ENCODE measurements at regions of chr14 and their contacts with region 1.

Region 1: DNA sequence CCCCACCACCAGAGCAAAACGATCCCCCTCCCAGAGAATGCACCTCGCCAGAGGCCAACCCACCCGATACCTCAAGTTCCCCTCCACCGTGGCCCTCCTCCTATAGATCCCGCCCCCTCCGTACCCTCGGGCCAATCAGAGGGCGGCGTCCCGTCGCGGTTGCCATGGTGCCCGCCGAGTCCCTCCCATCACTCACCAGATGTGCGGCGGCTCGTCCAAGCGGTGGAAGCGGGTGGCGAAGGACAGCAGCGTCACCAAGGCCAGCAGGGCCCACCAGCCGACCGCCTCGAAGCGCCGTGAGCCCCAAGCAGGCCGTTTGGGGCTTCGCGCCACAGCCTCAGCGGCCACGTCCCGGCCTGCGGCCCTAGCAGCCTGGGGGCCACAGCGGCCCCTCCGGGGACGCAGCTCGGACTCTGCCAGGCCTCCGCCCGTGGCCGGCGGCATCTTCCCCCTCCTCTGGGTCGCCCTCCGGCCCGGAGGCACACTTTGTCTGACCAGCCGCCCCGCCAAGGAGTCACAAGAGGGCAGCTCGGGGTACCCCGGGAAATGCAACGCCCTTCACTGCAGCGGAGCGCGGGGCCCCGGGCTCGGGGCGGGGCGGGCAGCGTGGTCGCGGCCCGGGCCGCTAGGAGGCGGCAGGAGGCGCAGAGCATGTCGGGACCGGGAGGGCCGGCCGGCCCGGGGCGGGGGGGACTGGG is at the start of gene POMT2:
- DNase-seq: peak; percentile 93
- ATAC-seq: peak; percentile 54
- H3K4me3 Mint-ChIP-seq: peak within 1 kb of the TSS; percentile 99
- H3K27ac Mint-ChIP-seq: peak within 1 kb of the TSS; percentile 100
- H3K4me1 Mint-ChIP-seq: peaks cover 19% of the 10 kb centered on the region
- H3K27me3 Mint-ChIP-seq: no peaks in the 10 kb centered on the region
- CTCF ChIP-seq: no peak
- total RNA-seq, gene POMT2: 28.7 and 30.8 TPM in 2 replicates

Region 2: DNA sequence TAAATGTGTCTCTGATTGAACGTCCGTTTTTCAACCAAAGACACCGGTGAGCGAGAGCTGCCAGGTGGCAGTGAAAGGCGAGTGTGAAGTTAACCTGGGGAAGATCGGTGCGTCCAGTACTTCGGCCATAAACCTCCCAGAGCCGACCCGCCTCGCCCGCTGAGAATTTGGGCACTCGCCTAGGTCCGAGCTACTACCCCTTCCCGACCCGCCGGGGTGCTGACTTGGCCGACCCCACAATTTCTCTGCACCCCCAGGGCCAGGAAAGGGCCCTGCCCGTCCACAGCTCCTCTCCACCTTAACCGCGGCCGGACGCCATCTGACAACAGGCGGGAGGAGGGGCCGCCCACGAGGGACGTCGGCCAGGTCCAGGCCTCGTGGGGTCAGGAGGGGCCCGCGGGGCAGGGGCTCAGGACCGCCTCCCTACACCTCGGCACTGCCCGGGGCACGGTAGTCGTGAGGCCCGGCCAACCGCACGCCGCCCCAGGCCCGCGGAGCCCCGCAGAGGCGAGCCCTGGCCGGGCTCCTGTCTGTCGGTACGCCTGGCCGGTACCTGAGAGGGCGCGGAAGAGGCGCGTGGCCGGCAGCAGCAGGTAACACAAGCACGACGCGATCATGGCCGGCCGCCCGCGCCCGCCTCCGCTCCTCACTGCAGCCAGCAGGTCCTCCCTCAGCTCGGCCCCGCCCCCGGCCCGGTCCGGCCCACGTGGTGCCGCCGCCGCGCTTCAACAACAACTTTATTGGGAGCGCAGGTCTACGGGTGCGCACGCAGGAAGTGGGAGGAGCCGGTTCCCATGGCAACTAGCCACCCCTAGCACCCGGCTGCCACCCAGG is 508.0 kb before region 1 on chr14 and contains the start of gene ANGEL1:
- CTCF ChIA-PET with region 1: no interaction called
- POLR2A ChIA-PET with region 1: interaction called, 3 read pairs
- intact Hi-C with region 1: loop called (anchors 1 kb)
- DNase-seq: peak; percentile 97
- ATAC-seq: peak; percentile 95
- H3K4me3 Mint-ChIP-seq: peak within 1 kb of the TSS; percentile 95
- H3K27ac Mint-ChIP-seq: peak within 1 kb of the TSS; percentile 91
- H3K4me1 Mint-ChIP-seq: peaks cover 25% of the 10 kb centered on the region
- H3K27me3 Mint-ChIP-seq: no peaks in the 10 kb centered on the region
- CTCF ChIP-seq: no peak
- total RNA-seq, gene ANGEL1: 14.9 and 17.9 TPM in 2 replicates

Region 3: DNA sequence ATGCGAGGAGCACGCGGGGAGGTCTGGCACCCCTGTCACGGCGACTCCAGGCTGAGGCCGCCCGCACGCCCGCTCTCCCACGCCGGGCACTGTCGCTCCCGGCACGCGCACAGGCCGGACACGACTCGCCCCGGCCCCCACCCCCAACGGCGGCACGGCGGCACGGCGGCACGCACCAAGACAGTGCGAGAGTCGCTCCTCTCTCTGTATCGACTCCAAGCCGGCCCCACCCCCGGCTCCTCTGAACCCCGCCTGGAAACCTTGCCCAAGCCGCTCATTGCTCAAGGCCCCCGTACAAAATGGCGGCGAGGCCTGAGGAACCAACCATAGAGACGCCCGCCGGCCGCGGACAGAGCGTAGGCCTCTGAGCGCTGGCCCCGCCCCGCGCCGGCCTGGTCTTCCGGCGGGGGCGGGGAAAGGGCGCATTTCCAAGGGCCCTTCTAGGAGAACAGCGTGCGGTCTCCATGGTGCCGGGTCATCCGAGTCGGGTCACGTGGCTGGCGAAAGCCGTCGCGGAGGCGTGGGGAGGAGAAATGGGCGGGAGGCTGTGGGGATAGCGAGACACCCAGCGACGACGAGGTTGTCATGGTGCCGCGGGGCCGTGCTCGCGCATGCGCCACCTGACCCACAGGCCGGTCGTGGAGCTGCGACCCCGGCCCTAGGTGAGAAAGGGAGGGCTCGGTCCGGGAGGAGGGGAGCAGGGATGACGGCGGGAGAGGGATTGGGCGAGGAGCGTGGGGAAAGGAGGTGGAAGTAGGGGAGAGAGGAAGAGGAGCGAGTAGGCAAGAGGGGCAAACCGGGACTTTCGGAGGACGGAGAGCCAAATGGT is 222.5 kb before region 1 on chr14 and contains the start of gene CIPC:
- CTCF ChIA-PET with region 1: interaction called, 6 read pairs
- POLR2A ChIA-PET with region 1: interaction called, 17 read pairs
- intact Hi-C with region 1: loop called (anchors 1 kb)
- DNase-seq: peak; percentile 96
- ATAC-seq: peak; percentile 86
- H3K4me3 Mint-ChIP-seq: peak within 1 kb of the TSS; percentile 99
- H3K27ac Mint-ChIP-seq: peak within 1 kb of the TSS; percentile 98
- H3K4me1 Mint-ChIP-seq: peaks cover 72% of the 10 kb centered on the region
- H3K27me3 Mint-ChIP-seq: no peaks in the 10 kb centered on the region
- CTCF ChIP-seq: no peak
- total RNA-seq, gene CIPC: 26.6 and 28.5 TPM in 2 replicates

Region 4: DNA sequence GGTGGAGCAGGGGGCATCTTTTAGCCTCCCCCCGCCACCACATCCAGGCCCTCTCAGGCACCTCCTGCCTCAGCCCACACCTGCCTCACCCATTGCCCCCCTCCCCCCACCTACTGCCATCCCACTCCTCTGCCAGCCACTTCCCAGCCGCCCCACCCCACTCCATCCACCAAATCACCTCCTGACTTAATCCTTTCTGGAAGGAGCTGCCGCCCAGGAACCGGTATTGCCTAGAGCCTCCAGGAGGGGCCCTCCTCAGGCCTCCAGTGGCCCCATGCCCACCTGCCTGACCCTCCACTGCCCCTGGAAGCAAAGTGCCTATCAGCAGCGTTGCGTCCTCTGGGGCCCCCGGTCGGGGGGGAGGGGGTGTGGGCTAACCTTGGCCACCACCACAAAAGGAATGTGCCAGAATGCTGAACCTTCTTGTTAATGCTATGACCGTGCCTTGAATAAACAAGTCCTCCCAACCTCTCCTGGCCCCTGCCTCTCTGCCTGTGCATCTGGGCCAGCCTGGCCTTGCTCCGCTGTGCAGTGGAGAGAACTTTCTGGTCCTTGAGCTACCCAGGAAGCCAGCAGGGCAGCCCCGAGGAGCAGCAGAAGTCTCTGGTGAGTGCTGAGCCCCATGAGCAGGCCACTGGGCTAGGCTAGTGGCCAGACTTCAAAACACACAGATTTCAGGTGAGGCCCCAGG is 61.2 kb before region 1 on chr14:
- CTCF ChIA-PET with region 1: no interaction called
- POLR2A ChIA-PET with region 1: no interaction called
- intact Hi-C with region 1: no loop called
- DNase-seq: no peak
- ATAC-seq: no peak
- H3K4me3 Mint-ChIP-seq: no peak overlapping the region
- H3K27ac Mint-ChIP-seq: no peak overlapping the region
- H3K4me1 Mint-ChIP-seq: no peaks in the 10 kb centered on the region
- H3K27me3 Mint-ChIP-seq: peaks cover 14% of the 10 kb centered on the region
- CTCF ChIP-seq: no peak

Region 5: DNA sequence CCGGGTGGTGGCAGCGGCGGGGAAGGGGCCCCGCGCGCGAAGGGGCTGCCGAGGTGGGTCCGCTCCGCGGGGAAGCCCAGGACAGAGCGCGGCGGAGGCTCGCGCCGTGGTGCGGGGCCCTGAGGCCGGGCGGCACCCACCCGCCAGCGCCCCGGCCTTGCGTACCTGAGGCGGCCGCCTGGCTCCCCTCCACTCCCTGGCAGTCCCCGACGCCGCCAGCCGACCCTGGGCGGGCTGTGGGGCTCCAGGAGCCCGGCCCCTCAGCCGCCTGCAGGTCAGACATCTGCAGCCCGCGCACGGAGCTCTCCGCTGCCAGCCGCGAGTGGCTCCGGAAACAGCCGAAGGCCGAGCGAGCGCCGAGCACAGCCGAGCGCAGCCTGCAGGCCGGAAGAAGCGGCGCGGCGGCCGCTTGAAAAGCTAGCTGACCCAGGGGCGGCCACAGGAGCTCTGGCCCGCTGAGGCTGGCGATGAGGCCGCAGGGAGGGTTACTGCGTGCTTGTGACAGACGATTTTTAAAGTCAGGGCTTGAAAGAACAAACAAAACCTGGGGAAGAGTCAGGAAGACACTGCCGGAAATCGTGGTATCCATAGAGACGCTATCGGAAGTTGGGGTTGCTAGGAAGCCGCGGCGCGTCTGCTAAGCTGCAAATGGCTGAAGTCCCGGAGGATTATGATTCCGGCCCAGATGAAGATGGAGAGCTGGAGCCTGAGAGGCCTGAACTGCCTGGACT is 56.5 kb after region 1 on chr14 and contains the starts of genes SAMD15 and TMED8:
- CTCF ChIA-PET with region 1: interaction called, 10 read pairs
- POLR2A ChIA-PET with region 1: interaction called, 96 read pairs
- intact Hi-C with region 1: loop called (anchors 1 kb)
- DNase-seq: peak; percentile 85
- ATAC-seq: peak; percentile 89
- H3K4me3 Mint-ChIP-seq: peak within 1 kb of the TSS; percentile 93
- H3K27ac Mint-ChIP-seq: peak within 1 kb of the TSS; percentile 93
- H3K4me1 Mint-ChIP-seq: peaks cover 39% of the 10 kb centered on the region
- H3K27me3 Mint-ChIP-seq: no peaks in the 10 kb centered on the region
- CTCF ChIP-seq: no peak
- total RNA-seq, gene SAMD15: 0.71 and 1.00 TPM in 2 replicates
- total RNA-seq, gene TMED8: 29.9 and 31.3 TPM in 2 replicates

Region 6: GRCh38 chr14:77616454-77617229 is 296.3 kb after region 1 on chr14 and contains the start of gene SPTLC2:
- CTCF ChIA-PET with region 1: interaction called, 3 read pairs
- POLR2A ChIA-PET with region 1: no interaction called
- intact Hi-C with region 1: loop called (anchors 1 kb)
- DNase-seq: peak; percentile 84
- ATAC-seq: peak; percentile 94
- H3K4me3 Mint-ChIP-seq: peak within 1 kb of the TSS; percentile 95
- H3K27ac Mint-ChIP-seq: peak within 1 kb of the TSS; percentile 86
- H3K4me1 Mint-ChIP-seq: peaks cover 42% of the 10 kb centered on the region
- H3K27me3 Mint-ChIP-seq: no peaks in the 10 kb centered on the region
- CTCF ChIP-seq: no peak
- total RNA-seq, gene SPTLC2: 34.1 and 43.8 TPM in 2 replicates

Region 7: DNA sequence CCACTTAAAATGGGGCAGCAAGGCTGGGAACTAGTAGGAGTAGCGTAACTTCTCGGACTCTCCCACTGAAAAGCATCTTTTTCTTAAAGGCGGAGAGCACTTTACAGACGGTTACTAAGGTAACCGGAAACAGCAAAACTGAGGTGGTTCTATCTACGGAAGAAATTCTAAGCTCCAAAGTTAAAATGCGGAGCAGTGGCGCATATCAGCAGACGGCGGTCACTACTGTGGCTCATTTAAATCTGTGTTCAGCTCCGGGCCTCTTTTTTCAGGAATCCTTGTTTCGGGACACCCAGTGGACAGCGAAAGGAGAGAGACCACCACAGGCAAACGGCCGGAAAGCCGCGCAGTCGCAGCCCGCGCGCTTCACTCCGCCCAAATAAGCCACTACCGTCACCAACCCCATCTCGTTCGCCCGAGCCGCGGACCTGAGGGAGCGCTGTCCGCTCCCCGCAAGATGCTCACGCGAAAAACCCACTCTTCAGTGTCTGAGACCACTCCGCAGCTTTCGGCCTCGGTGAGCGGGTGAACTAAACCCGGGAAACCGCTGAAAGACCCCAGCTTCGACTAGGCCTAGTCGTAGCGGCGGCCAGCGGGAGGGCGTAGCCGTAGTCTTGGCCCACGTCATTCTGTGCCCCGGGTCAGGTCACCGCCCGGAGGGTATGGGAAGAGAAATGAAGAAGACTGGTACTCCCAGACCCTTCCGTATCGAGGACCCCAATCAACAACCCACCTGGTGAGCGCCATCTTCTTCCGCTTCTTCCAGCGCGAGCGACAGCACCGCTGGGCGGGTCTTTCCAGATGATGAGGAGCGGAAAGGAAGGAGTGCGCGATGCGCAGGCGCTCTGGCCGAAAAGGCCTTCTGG is 440.2 kb after region 1 on chr14 and contains the start of gene SNW1:
- CTCF ChIA-PET with region 1: no interaction called
- POLR2A ChIA-PET with region 1: interaction called, 12 read pairs
- intact Hi-C with region 1: loop called (anchors 1 kb)
- DNase-seq: peak; percentile 77
- ATAC-seq: peak; percentile 91
- H3K4me3 Mint-ChIP-seq: peak within 1 kb of the TSS; percentile 97
- H3K27ac Mint-ChIP-seq: peak within 1 kb of the TSS; percentile 97
- H3K4me1 Mint-ChIP-seq: peaks cover 37% of the 10 kb centered on the region
- H3K27me3 Mint-ChIP-seq: no peaks in the 10 kb centered on the region
- CTCF ChIP-seq: no peak
- total RNA-seq, gene SNW1: 88.2 and 89.3 TPM in 2 replicates